ENCODE measurements at regions of chr6 and their contacts with region 1.

Region 1: DNA sequence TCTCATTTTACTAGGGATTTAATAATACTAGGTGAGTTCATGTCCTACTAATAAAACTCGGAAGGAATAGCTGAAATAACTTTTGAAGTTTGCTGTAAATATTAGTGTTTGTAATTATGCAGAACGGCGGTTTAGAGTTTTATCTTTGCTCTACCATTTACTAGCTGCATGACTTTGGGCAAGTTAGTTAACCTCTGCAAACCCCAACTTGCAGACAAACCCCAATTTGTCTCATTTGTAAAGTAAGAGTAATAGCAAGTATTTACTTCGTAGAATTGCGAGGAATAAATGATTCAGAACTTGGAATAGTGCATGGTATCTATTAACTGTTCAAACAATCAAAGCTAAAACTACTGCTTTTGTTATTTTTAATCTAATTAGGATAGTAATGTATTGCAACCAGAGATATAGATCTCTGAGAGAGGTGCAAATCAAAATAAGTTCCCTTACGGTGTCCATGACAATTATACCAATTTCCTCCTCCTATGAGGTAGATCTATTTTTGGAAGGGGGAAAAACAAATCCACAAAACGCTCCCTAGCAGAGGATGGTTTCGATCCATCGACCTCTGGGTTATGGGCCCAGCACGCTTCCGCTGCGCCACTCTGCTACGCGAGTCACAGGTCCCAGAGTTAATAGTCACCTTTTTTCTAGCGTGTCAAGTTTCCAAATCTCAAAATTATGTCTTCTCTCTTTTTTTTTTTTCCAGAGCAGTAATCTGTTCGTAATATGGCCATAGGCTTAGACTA is 35.1 kb upstream of the BTN3A2 start:
- DNase-seq: peak; percentile 52
- H3K4me3 ChIP-seq: peak overlapping the region in 2 of 3 experiments; percentile 92 to 95
- H3K27ac ChIP-seq: no peak overlapping the region
- H3K4me1 ChIP-seq: peaks cover 23% of the 10 kb centered on the region
- H3K27me3 ChIP-seq: peaks cover 0 to 7% of the 10 kb centered on the region in 2 experiments
- CTCF ChIP-seq: no peak
- POLR2A ChIP-seq: no peak

Region 2: GRCh38 chr6:26175428-26176181 is 154.3 kb before region 1 on chr6:
- CTCF ChIA-PET with region 1: interaction called, 3 read pairs
- POLR2A ChIA-PET with region 1: no interaction called
- dilution Hi-C with region 1: no loop called
- intact Hi-C with region 1: loop called (anchors 2 kb)
- DNase-seq: peak; percentile 85
- H3K4me3 ChIP-seq: no peak overlapping the region
- H3K27ac ChIP-seq: no peak overlapping the region
- H3K4me1 ChIP-seq: peaks cover 11% of the 10 kb centered on the region
- H3K27me3 ChIP-seq: no peaks in the 10 kb centered on the region
- CTCF ChIP-seq: peak; percentile 46 to 51
- POLR2A ChIP-seq: no peak

Region 3: DNA sequence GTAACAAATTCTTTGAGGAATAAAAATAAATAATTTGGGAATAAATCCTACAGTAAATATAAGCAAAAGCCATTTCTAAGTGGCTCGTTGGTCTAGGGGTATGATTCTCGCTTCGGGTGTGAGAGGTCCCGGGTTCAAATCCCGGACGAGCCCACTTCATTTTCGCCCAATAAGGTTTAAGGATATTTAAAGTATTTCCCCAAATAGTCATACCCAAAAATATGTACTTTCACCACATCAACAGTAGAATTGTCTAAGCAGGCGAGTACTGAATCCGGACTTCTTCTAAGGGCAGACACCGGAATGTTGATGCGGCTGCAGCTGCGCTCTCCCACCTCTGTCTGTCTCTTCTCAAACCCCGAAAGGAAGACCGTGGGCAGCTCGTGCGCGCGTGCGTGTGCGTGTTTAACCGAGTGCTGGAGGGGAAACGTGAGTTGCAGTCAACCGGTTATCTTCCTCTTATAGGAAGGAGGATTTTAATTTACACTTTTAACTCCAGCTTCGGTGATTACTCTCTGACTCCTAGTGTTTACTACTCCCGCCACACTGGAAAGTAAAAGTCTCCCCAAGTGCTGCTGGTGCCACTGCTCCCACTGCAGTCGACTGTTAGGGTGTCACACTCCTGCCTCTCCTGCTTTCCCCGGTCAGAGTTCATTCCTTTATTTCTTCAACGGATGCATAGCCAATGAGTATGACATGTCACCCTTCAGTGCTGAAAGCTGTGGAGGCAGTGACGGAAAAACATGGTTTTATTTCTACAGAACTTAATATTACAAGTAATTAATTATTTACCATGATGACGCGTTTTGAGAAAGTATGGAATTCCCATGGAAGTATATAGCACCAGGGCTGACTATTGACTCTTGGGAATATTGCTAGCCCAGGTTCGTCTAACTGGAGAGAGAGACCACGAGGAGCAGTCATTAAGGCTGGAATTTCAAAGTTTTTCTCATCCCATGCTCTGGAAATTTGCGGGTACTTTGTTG is 762.0 kb after region 1 on chr6:
- CTCF ChIA-PET with region 1: no interaction called
- POLR2A ChIA-PET with region 1: no interaction called
- dilution Hi-C with region 1: no loop called
- intact Hi-C with region 1: loop called (anchors 5 kb)
- DNase-seq: peak; percentile 56
- H3K4me3 ChIP-seq: peak overlapping the region; percentile 8 to 17 (median 14)
- H3K27ac ChIP-seq: no peak overlapping the region
- H3K4me1 ChIP-seq: peaks cover 10% of the 10 kb centered on the region
- H3K27me3 ChIP-seq: peaks cover 2 to 22% of the 10 kb centered on the region in 2 experiments
- CTCF ChIP-seq: no peak
- POLR2A ChIP-seq: no peak

Measured in endothelial cell of umbilical vein (primary cell).